Activated CD4-positive, alpha-beta T cell treated with anti-CD3 and anti-CD28 coated beads for 36 hours (primary cell): ENCODE measurements at regions of chr1 and their contacts with region 1.

Region 1: GRCh38 chr1:231603598-231604275 is 22.9 kb upstream of the DISC1 start:
- DNase-seq: peak; percentile 50
- ATAC-seq: peak; percentile 85
- H3K4me3 Mint-ChIP-seq: peak overlapping the region; percentile 73
- H3K27ac Mint-ChIP-seq: peak overlapping the region; percentile 80
- H3K4me1 Mint-ChIP-seq: peaks cover 5% of the 10 kb centered on the region
- H3K27me3 Mint-ChIP-seq: no peaks in the 10 kb centered on the region

Region 2: DNA sequence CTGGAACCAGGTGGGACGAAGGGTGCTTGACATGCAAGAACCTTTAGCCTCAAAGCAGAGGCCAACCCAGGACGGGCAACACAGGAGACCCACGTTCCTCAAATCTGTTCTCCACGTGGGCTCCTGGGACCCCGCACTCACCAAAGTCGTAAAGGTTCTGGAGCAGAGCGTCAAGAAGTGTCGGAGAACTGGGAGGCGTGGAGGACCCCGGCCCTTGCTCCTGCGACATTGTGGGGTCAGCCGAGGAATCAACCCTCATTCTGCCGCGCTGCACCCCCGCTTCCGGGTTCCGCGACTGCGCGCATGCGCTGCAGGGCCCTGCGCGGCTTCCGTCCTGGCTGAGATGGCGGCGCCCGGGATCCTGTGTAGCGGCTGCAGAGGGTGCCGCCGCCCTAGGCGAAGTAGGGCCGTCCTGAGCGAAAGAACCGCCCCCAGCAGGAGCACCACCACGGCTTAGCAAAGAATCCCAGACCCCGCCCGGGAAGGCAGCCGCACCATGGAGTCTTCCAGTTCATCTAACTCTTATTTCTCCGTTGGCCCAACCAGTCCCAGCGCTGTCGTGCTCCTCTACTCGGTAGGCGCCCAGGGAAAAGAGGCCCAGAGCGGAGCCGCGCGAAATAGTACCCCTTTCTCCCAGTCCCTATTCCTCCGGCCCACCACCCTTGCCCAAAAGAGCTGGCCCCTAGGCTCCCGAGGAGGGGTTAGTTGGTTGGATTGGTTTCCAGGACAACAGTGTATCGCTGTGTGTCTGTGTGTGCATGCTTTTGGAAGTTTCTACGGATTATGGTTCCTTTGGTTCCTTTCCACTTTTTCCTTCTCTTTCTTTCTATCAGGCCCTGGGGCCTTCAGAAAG is 362.6 kb before region 1 on chr1 and contains the start of gene GNPAT:
- CTCF ChIA-PET with region 1: no interaction called
- POLR2A ChIA-PET with region 1: interaction called, 3 read pairs
- intact Hi-C with region 1: loop called in 1 of 2 experiments (anchors 2 kb)
- DNase-seq: peak; percentile 94
- ATAC-seq: peak; percentile 98
- H3K4me3 Mint-ChIP-seq: peak within 1 kb of the TSS; percentile 98
- H3K27ac Mint-ChIP-seq: peak within 1 kb of the TSS; percentile 95
- H3K4me1 Mint-ChIP-seq: peaks cover 58% of the 10 kb centered on the region
- H3K27me3 Mint-ChIP-seq: no peaks in the 10 kb centered on the region
- total RNA-seq, gene GNPAT: 58.0 to 62.0 TPM

Region 3: DNA sequence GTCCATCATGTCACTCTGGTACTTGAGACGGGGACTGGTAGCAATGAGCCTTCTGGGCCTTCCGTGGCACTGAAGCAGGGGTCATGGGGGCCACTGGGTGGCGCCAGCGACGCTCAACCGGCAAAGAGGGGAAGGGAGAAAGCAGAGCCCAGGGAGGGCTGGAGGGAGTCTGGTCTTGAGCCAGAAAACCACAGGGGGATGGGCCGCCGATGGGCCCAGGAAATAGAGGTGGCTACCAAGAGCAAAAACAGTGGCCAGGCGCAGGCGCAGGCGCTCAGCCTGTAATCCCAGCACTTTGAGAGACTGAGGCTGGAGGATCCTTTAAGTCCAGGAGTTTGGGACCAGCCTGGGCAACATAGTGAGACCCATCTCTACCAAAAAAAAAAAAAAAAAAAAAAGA is 287.9 kb before region 1 on chr1:
- CTCF ChIA-PET with region 1: interaction called, 10 read pairs
- POLR2A ChIA-PET with region 1: no interaction called
- intact Hi-C with region 1: loop called in 1 of 2 experiments (anchors 1 kb)
- DNase-seq: peak; percentile 74
- ATAC-seq: peak; percentile 91
- H3K4me3 Mint-ChIP-seq: no peak overlapping the region
- H3K27ac Mint-ChIP-seq: no peak overlapping the region
- H3K4me1 Mint-ChIP-seq: no peaks in the 10 kb centered on the region
- H3K27me3 Mint-ChIP-seq: no peaks in the 10 kb centered on the region